B cell (primary cell): ENCODE measurements at regions of chr19 and their contacts with region 1.

Region 1: DNA sequence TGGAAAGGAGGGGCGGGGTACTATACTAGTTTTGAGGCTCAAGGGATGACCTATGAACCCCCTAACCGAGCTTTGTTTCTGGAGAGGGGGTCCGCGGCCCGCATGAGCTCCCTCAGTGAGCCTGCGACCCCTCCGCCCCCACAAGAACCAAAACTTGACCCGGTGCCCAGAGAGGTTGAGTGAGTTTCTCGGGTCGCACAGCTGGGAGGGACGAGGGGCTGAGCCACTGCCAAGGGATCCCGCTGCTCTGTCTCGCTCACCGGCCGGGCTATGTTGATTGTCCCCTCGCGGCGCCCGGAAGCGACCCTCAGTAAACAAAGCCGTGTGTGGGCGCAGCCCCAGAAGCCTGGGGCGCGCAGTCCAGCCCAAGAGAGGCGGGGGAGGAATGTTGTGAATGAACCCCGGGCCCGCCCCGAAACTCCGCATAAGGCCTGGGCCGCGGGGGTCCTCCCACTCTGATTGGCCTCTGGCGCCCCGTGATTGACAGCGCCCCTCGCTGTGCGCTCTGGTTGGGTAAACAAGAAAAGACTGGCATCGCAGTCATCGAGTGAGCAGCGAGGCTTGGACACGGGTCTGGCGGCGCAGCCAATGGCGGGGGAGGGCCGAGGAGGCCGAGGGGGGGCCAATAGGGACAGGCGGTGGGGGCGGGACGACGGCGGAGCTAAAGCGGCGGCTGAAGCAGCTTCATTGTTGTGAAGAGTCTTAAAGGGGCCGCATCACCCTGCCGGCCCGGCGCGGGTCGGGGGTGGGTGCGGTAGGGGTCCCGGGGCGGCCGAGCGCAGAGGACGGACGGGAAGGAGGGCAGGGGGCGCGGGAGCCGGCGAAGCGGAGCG is at the start of gene ZSWIM4:
- DNase-seq: peak; percentile 97
- ATAC-seq: peak; percentile 95
- H3K4me3 ChIP-seq: peak within 1 kb of the TSS; percentile 44 to 81 (median 68)
- H3K4me3 Mint-ChIP-seq: peak within 1 kb of the TSS; percentile 98
- H3K27ac ChIP-seq: peak within 1 kb of the TSS; percentile 58 to 82
- H3K27ac Mint-ChIP-seq: peak within 1 kb of the TSS; percentile 95
- H3K4me1 ChIP-seq: peaks cover 21 to 26% of the 10 kb centered on the region in 2 donors
- H3K4me1 Mint-ChIP-seq: peaks cover 36% of the 10 kb centered on the region
- H3K27me3 ChIP-seq: no peaks in the 10 kb centered on the region
- H3K27me3 Mint-ChIP-seq: no peaks in the 10 kb centered on the region
- CTCF ChIP-seq: no peak
- total RNA-seq, gene ZSWIM4: 10.1 and 10.6 TPM in 2 replicates

Region 2: DNA sequence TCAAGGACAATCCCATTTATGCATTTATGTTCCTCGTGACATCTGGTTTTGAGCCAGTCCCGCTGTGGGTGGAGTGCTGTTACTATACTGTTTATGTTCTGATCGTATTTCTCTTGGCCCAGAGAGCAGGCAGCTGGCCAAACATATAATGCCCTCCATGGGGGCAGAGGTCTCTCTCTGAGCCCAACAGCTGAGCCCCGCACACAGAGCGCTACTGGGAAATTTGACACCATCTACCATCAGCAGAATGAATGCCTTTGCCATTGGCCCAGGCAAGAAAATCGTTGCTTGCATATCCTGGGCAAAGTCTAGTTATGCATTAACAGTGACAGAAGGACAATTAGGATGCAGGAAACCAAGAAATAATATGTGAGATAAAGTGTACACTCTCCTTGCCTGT is 161.9 kb before region 1 on chr19:
- CTCF ChIA-PET with region 1: no interaction called
- POLR2A ChIA-PET with region 1: no interaction called
- intact Hi-C with region 1: no loop called
- DNase-seq: no peak
- ATAC-seq: no peak
- H3K4me3 ChIP-seq: no peak overlapping the region
- H3K4me3 Mint-ChIP-seq: no peak overlapping the region
- H3K27ac ChIP-seq: no peak overlapping the region
- H3K27ac Mint-ChIP-seq: no peak overlapping the region
- H3K4me1 ChIP-seq: no peaks in the 10 kb centered on the region
- H3K4me1 Mint-ChIP-seq: peaks cover 2% of the 10 kb centered on the region
- H3K27me3 ChIP-seq: peaks cover 0 to 8% (median 2%) of the 10 kb centered on the region in 4 experiments
- H3K27me3 Mint-ChIP-seq: peaks cover 18% of the 10 kb centered on the region
- CTCF ChIP-seq: no peak

Region 3: DNA sequence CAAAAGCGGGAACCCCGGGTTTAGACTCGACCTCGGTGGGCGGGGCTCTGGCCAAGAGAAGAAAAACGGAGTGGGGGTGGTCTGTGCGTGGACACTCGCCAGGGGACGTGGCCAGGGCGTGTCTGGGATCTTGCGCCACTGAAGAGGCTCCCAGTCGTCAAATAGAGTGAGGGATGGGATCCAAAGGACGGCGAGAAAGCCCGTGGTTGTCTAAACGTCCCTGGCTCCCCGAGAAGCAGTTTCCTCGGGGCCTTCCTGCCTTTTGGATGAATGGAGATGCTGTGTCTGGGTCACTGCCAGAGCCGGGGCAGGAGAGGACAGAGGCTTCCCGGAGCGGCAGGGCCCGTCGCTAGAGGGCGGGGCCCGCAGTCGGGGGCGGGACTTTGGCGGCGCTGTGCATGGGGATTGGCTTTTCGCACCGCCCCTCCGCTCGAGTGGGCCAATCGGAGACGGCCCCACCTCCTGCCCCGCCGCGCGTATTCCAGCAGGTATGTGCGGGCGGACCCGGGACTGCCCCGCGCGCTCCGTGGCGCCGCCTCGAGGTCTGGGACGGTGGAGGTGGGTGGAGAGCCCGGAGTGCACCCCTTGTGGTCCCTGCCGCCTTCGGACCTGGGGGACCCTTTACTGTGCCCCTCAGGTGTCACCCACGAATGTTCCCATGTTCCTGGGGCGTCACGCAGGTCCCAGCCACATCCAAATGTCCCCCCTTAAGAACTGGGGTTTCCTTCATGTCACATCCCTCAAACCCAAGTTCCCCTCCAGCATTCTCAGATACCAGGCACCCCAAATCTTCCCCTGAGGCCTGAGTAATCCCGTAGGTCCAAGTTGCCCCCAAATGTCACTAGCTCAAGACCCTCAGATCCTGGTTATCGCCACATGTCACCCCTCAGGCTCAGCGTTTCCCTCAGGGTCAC is 38.6 kb after region 1 on chr19:
- CTCF ChIA-PET with region 1: interaction called, 4 read pairs
- POLR2A ChIA-PET with region 1: interaction called, 14 read pairs
- intact Hi-C with region 1: loop called (anchors 2 kb)
- DNase-seq: peak; percentile 96
- ATAC-seq: peak; percentile 87
- H3K4me3 ChIP-seq: peak overlapping the region; percentile 28 to 77 (median 69)
- H3K4me3 Mint-ChIP-seq: peak overlapping the region; percentile 88
- H3K27ac ChIP-seq: peak overlapping the region; percentile 58 to 81
- H3K27ac Mint-ChIP-seq: peak overlapping the region; percentile 86
- H3K4me1 ChIP-seq: peaks cover 39 to 45% of the 10 kb centered on the region in 2 donors
- H3K4me1 Mint-ChIP-seq: peaks cover 38% of the 10 kb centered on the region
- H3K27me3 ChIP-seq: no peaks in the 10 kb centered on the region
- H3K27me3 Mint-ChIP-seq: no peaks in the 10 kb centered on the region
- CTCF ChIP-seq: peak; percentile 73

Region 4: DNA sequence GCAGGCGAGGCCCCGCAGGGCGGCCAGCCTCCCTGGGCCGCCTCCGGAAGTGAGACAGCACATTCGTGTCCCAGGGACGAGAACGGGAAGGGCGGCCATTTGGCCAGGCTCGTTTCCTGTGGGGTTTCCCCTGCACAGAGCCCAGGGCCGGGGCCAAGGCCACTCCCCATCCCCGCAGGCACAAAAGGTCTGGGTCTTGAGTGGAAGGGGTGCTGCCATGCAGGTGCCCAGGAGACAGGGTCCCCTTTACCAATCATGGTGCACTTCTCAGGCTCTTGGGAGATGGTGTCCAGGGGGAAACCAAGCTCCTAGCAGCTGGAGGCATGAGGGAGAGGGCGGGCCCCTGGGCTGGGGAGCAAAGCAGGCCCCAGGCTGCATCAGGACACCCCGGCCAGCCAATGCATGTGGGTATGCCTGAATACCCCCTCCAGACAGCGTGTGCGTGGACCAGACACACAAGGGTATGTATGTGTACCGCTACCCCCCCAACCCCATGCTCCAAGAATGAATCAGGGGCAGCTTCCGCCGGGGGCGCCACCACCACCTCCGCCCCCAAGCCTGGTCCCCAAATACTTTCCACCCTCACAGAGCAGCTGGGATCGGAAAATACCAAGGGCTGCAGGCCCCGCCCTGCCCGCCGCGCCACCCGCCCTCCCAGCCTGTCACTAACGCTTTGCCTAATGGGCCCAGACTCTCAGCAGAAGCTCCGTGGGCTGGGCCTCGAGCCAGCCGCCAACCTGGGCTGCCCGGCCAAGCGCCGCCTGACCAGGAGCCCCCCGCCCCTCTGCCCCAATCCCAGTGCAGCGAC is 44.4 kb after region 1 on chr19:
- CTCF ChIA-PET with region 1: interaction called, 4 read pairs
- POLR2A ChIA-PET with region 1: interaction called, 14 read pairs
- intact Hi-C with region 1: loop called (anchors 2 kb)
- DNase-seq: peak; percentile 82
- ATAC-seq: peak; percentile 44
- H3K4me3 ChIP-seq: peak overlapping the region; percentile 1 to 75 (median 62)
- H3K4me3 Mint-ChIP-seq: peak overlapping the region; percentile 88
- H3K27ac ChIP-seq: peak overlapping the region; percentile 93 to 94
- H3K27ac Mint-ChIP-seq: peak overlapping the region; percentile 95
- H3K4me1 ChIP-seq: peaks cover 76 to 83% of the 10 kb centered on the region in 2 donors
- H3K4me1 Mint-ChIP-seq: peaks cover 66% of the 10 kb centered on the region
- H3K27me3 ChIP-seq: no peaks in the 10 kb centered on the region
- H3K27me3 Mint-ChIP-seq: no peaks in the 10 kb centered on the region
- CTCF ChIP-seq: no peak